AG04449 (cell line): ENCODE measurements at regions of chr7 and their contacts with region 1.

Region 1: DNA sequence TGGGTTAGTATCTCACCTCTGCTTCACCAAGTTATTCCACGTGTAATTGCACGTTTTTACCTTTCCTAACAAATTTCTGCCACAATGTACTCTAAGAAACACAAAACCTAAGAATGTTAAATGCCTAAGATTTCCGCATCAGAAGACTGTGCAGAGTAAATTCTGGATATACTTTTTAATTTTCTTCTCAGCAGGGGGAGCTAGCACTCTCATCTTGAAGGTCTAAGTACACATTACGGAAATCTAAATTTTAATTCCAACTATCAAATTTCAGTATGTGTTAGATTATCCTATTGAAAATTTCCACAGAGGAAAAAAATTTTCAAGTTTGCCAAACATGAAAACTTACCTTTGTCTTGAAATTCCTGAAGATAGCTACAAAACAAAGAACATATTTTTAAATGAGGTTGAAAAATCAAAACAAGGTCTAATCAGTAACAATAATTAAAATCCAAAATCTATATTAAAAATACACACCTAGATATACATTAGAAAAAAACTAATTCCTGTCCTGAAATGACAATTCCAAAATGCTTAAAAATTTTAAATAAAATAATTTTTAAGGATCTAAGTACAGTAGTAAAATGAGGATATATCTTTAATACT is 10.5 kb downstream of the SKAP2 start:
- DNase-seq: no peak
- H3K4me3 ChIP-seq: no peak overlapping the region
- CTCF ChIP-seq: peak; percentile 29

Region 2: DNA sequence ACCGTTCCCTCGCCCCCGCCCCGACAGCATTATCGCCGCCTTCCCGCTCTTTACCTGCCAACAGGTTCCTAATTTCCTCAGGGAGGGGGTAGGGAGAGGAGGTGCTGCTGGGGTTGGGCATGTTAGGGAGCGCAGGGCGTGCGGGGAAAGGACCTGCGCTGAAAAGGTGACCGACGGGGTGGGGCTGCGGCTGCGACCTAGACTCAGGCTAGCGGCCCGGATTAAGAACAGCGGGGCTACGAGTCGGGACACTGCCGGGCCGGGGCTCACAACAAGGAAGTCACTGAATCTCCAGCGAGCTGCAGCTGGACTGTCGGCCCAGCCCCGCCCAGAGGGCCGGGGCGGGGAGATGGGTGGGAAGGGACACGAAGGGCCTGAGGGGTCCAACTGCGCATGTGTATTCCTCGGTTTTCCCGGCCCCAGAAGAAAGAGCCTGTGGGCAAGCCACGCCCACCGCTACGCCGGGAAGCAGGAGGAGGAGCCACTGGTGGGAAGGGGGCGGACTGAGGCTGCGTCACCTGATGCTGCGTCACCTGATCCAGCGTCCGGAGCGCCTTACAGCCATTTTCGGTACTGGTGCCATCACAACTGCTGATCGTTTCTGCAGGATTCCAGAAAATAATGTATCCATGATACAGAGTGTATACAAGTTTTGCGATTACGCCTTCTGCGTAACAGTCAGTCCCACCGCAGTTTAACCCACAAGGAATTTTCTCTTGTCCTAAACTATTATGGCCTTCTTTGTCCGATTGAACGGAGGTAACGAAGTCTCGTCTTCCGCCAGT is 10.6 kb after region 1 on chr7 and contains the start of gene SKAP2:
- CTCF ChIA-PET with region 1: interaction called, 25 read pairs
- POLR2A ChIA-PET with region 1: interaction called, 3 read pairs
- DNase-seq: peak; percentile 87
- H3K4me3 ChIP-seq: peak within 1 kb of the TSS; percentile 87
- CTCF ChIP-seq: no peak

Region 3: DNA sequence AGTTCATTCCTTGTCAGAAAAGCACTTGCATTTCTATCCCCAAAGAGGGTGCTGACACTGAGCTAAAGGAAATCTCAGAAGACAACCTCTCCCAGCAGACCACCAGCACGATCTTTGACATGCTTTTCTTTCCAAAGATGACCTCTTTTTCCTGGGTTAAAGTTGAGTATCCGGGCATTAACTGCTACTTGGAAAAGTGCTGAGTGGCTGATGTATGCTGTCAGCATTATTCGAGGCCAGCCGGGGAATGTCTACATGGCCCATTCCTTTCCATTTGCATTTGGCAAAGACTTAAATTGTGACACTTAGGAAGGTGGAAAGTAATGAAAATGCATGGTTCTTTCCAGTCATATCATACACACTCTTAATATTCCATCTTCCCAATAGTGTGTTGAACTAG is 101.1 kb after region 1 on chr7:
- CTCF ChIA-PET with region 1: no interaction called
- POLR2A ChIA-PET with region 1: no interaction called
- DNase-seq: no peak
- H3K4me3 ChIP-seq: no peak overlapping the region
- CTCF ChIP-seq: no peak

Region 4: DNA sequence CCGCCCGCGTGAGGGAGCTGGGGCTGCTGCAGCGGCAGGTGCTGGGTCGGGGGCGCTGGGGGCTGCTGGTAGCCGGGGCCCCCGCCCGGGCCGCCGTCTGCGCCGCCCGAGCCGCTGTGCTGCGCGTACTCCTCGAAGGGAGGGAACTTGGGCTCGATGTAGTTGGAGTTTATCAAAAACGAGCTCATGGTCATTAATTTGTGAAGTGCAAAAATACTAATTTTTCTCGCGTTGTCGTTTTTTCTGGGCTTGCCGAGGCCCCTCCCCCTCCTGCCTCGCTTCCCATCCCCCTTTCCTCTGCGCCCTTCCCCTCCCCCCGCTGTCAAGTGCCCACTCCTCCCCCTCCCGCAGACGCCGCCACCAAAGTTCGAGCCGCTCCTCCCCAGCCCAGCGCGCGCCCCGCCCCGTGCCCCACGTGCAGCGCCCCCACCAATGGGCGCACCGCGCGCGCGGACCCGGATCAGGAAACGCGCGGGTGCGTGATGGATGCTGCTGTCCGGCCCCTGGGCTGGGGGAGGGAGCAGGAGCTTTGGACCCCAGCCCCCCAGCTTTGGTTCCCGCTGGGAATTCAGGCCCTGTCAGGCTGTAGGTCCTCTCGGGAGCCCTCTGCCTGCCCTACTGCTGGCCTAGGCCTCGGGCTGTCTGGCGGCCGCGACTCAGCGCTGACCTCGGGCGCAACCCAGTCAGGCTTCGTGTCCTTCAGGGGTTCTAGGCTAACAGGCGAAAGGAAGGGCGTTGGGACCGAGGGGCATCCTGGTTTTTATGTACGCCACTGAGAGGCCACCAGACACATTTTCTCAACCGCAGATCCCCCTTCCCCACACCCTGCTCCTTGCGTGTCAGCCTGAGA is 276.9 kb after region 1 on chr7 and contains the start of gene HOXA4:
- CTCF ChIA-PET with region 1: interaction called, 32 read pairs
- POLR2A ChIA-PET with region 1: no interaction called
- DNase-seq: no peak
- H3K4me3 ChIP-seq: peak within 1 kb of the TSS; percentile 68
- CTCF ChIP-seq: no peak

Region 5: DNA sequence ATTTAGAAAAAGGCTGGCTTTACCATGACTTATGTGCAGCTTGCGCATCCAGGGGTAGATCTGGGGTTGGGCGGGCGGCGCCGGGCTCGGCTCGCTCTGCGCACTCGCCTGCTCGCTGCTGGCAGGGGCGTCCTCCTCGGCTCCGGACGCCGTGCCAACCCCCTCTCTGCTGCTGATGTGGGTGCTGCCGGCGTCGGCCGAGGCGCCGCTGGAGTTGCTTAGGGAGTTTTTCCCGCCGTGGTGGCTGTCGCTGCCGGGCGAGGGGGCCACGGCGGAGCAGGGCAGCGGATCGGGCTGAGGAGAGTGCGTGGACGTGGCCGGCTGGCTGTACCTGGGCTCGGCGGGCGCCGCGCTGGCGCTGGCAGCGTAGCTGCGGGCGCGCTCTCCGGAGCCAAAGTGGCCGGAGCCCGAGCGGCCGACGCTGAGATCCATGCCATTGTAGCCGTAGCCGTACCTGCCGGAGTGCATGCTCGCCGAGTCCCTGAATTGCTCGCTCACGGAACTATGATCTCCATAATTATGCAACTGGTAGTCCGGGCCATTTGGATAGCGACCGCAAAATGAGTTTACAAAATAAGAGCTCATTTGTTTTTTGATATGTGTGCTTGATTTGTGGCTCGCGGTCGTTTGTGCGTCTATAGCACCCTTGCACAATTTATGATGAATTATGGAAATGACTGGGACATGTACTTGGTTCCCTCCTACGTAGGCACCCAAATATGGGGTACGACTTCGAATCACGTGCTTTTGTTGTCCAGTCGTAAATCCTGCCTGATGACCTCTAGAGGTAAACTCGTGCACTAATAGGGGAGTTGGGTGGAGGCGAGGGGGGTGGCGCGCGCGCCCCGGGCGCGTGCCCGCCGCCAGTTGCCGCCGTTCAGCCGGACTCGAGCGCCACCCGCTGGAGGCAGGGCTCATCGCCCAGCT is 289.4 kb after region 1 on chr7 and contains the start of gene HOXA5:
- CTCF ChIA-PET with region 1: interaction called, 71 read pairs
- POLR2A ChIA-PET with region 1: no interaction called
- DNase-seq: no peak
- H3K4me3 ChIP-seq: peak within 1 kb of the TSS; percentile 48
- CTCF ChIP-seq: peak; percentile 59

Region 6: GRCh38 chr7:27150568-27151340 is 296.9 kb after region 1 on chr7:
- CTCF ChIA-PET with region 1: interaction called, 71 read pairs
- POLR2A ChIA-PET with region 1: no interaction called
- DNase-seq: no peak
- H3K4me3 ChIP-seq: peak overlapping the region; percentile 72
- CTCF ChIP-seq: peak; percentile 91